PC-3 (cell line): ENCODE measurements at regions of chr14 and their contacts with region 1.

Region 1: GRCh38 chr14:34059855-34060638 is 109.2 kb upstream of the EGLN3 start:
- DNase-seq: peak; percentile 89
- ATAC-seq: peak; percentile 97
- H3K4me3 ChIP-seq: peak overlapping the region; percentile 67
- H3K27ac ChIP-seq: no peak overlapping the region
- H3K4me1 ChIP-seq: peaks cover 17% of the 10 kb centered on the region
- H3K27me3 ChIP-seq: no peaks in the 10 kb centered on the region
- CTCF ChIP-seq: peak; percentile 47; the same call in 1 of the 2 replicates

Region 2: GRCh38 chr14:33814010-33814409 is 246.0 kb before region 1 on chr14:
- CTCF ChIA-PET with region 1: no interaction called
- POLR2A ChIA-PET with region 1: no interaction called
- intact Hi-C with region 1: no loop called
- DNase-seq: no peak
- ATAC-seq: no peak
- H3K4me3 ChIP-seq: no peak overlapping the region
- H3K27ac ChIP-seq: no peak overlapping the region
- H3K4me1 ChIP-seq: no peaks in the 10 kb centered on the region
- H3K27me3 ChIP-seq: peaks cover 7% of the 10 kb centered on the region; the same call in 1 of the 2 replicates
- CTCF ChIP-seq: no peak

Region 3: DNA sequence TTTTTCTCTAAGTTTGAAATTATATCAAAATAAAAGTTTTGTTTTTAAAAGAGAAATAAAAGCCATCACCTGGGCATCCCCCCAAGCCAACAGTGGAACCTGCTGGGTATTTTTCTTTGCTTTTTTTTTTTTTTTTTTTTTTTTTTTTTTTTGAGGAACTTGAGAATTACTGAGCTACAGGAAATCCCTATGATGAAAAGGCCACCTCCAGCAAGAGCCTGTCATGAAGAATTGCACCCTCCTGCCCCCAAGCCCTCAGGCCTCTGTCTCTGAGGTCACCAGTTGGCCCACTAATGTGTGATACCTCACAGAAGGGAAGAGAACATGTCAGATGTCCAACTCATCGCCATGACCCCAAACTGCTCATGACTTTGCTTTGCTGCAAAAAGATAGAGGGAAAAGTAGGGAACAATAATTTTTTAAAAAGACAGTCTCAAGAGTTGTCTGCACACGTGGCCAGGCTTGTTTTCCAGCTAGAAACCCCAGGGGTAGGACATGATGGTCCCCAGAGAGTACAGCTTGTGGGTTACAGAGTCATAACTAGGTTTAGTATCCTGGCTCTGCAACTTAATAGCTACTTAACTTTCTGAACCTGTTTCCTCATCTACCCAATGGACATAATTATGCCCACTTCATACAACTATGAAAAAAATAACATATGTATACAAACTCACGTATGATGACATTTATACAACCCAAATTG is 15.1 kb after region 1 on chr14:
- CTCF ChIA-PET with region 1: interaction called, 3 read pairs
- POLR2A ChIA-PET with region 1: interaction called, 14 read pairs
- intact Hi-C with region 1: no loop called
- DNase-seq: no peak
- ATAC-seq: no peak
- H3K4me3 ChIP-seq: no peak overlapping the region
- H3K27ac ChIP-seq: no peak overlapping the region
- H3K4me1 ChIP-seq: peaks cover 9% of the 10 kb centered on the region; the same call in 1 of the 2 replicates
- H3K27me3 ChIP-seq: no peaks in the 10 kb centered on the region
- CTCF ChIP-seq: no peak